Mammary epithelial cell (primary cell): ENCODE measurements at regions of chr3 and their contacts with region 1.

Region 1: DNA sequence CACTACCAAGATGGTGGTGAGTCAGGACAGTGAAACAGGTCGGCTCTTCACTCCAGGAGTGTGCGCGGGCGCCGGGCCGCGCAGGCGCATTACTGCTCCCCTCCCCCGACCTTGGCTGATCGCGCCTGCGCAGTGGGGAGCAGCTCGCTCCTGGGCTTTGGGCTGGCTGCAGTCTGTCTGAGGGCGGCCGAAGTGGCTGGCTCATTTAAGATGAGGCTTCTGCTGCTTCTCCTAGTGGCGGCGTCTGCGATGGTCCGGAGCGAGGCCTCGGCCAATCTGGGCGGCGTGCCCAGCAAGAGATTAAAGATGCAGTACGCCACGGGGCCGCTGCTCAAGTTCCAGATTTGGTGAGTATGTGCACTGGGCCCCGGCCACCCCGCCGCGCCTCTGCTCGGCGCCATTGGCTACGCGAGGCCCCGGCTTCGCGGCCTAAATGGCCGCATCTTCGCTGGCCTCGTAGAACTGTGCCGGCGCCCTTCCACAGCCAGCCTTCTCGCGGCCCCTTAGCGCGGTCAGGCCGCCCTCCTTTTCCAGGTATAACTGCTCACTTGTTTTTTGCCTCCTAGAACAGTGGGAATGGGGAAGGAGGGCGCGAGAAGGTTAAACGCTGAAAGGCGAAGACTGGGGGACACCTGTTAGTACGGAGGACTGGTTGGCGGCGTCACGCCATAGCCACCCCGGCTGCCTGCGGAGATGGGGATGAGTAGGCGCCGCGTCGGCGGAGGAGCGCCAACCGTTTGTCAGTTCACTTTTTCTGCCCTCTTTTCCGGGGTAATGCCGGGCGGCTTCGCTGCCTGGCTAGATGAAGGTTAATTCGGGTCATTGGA is at the start of gene SELENOT:
- DNase-seq: peak; percentile 96
- H3K4me3 ChIP-seq: peak within 1 kb of the TSS; percentile 66 to 95 (median 77)
- H3K27ac ChIP-seq: peak within 1 kb of the TSS; percentile 68
- H3K4me1 ChIP-seq: peaks cover 29% of the 10 kb centered on the region
- H3K27me3 ChIP-seq: no peaks in the 10 kb centered on the region
- CTCF ChIP-seq: peak; percentile 12 to 33
- total RNA-seq, gene SELENOT: 111 to 125 TPM

Region 2: GRCh38 chr3:150703299-150704134 is 100.2 kb after region 1 on chr3 and contains the start of gene ERICH6:
- CTCF ChIA-PET with region 1: no interaction called
- dilution Hi-C with region 1: no loop called
- in situ Hi-C with region 1: no loop called
- intact Hi-C with region 1: loop called (anchors 2 kb)
- DNase-seq: peak; percentile 81
- H3K4me3 ChIP-seq: peak within 1 kb of the TSS; percentile 74 to 98 (median 79)
- H3K27ac ChIP-seq: peak within 1 kb of the TSS; percentile 88
- H3K4me1 ChIP-seq: peaks cover 12% of the 10 kb centered on the region
- H3K27me3 ChIP-seq: no peaks in the 10 kb centered on the region
- CTCF ChIP-seq: peak in 1 of 2 donors; percentile 21
- total RNA-seq, gene ERICH6: not detected

Region 3: GRCh38 chr3:150763122-150763841 is 159.9 kb after region 1 on chr3 and contains the start of gene SIAH2:
- CTCF ChIA-PET with region 1: no interaction called
- dilution Hi-C with region 1: no loop called
- in situ Hi-C with region 1: no loop called
- intact Hi-C with region 1: loop called (anchors 2 kb)
- DNase-seq: peak; percentile 95
- H3K4me3 ChIP-seq: peak within 1 kb of the TSS; percentile 59 to 96 (median 87)
- H3K27ac ChIP-seq: peak within 1 kb of the TSS; percentile 75
- H3K4me1 ChIP-seq: peaks cover 30% of the 10 kb centered on the region
- H3K27me3 ChIP-seq: no peaks in the 10 kb centered on the region
- CTCF ChIP-seq: no peak
- total RNA-seq, gene SIAH2: 23.7 to 30.5 TPM